Activated CD4-positive, alpha-beta T cell treated with anti-CD3 and anti-CD28 coated beads, Interleukin-2, amount 10 ng/mL, durations not matched to agents 24 days and 14 days (primary cell): ENCODE measurements at regions of chr2 and their contacts with region 1.

Region 1: GRCh38 chr2:108583903-108584520 is 49.7 kb downstream of the LIMS1 start:
- DNase-seq: peak; percentile 88
- H3K4me3 Mint-ChIP-seq: no peak overlapping the region
- H3K27ac Mint-ChIP-seq: peak overlapping the region; percentile 5
- H3K4me1 Mint-ChIP-seq: peaks cover 37% of the 10 kb centered on the region
- H3K27me3 Mint-ChIP-seq: no peaks in the 10 kb centered on the region

Region 2: DNA sequence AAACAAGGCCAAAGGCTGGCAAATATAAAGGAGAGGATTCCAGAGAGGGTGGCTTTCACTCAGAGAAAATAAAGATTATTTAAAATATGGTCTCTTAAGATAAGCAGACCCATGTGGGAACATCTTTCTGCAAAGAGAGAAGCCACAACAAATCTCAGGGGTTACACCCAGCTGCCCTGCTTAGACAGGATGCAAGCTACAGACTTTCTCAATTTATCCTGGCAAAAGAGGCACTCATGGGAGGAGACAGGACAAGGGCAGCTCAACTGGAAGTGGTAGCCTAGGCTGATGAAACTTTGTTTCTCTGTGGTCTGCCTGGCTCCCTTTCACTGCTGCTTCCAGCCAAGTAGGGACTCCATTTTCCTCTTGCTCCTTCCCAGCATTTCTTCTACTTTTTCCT is 232.1 kb before region 1 on chr2:
- intact Hi-C with region 1: loop called (anchors 1 kb)
- DNase-seq: no peak
- H3K4me3 Mint-ChIP-seq: no peak overlapping the region
- H3K27ac Mint-ChIP-seq: no peak overlapping the region
- H3K4me1 Mint-ChIP-seq: no peaks in the 10 kb centered on the region
- H3K27me3 Mint-ChIP-seq: peaks cover 12% of the 10 kb centered on the region

Region 3: DNA sequence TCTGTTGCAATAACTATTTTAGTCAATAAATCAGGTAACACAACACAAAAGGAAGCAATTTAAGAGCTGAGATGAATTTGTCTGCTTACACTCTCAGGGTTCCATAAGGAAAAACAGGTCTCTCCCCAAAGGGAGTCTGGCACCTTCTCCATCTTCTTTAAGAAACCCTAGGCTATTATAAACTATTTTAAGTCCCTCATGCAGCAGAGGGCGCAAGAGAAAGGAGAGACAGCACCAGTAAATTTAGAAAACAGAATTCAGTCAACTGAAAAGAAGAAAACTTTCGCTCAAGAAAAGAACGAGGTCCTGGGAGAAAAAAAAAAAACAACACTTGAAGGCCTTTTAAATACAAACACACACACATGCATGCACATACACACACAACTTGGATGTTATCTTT is 187.2 kb before region 1 on chr2:
- intact Hi-C with region 1: loop called (anchors 5 kb)
- DNase-seq: peak; percentile 60
- H3K4me3 Mint-ChIP-seq: no peak overlapping the region
- H3K27ac Mint-ChIP-seq: no peak overlapping the region
- H3K4me1 Mint-ChIP-seq: no peaks in the 10 kb centered on the region
- H3K27me3 Mint-ChIP-seq: peaks cover 5% of the 10 kb centered on the region

Region 4: GRCh38 chr2:108448678-108449493 is 135.1 kb before region 1 on chr2 and contains the start of gene GCC2:
- intact Hi-C with region 1: loop called (anchors 5 kb)
- DNase-seq: peak; percentile 99
- H3K4me3 Mint-ChIP-seq: peak within 1 kb of the TSS; percentile 100
- H3K27ac Mint-ChIP-seq: peak within 1 kb of the TSS; percentile 98
- H3K4me1 Mint-ChIP-seq: peaks cover 27% of the 10 kb centered on the region
- H3K27me3 Mint-ChIP-seq: no peaks in the 10 kb centered on the region
- total RNA-seq, gene GCC2: 38.1 and 43.4 TPM in 2 replicates

Region 5: GRCh38 chr2:108492364-108492763 is 91.6 kb before region 1 on chr2:
- intact Hi-C with region 1: loop called (anchors 5 kb)
- DNase-seq: no peak
- H3K4me3 Mint-ChIP-seq: no peak overlapping the region
- H3K27ac Mint-ChIP-seq: peak overlapping the region; percentile 45
- H3K4me1 Mint-ChIP-seq: peaks cover 4% of the 10 kb centered on the region
- H3K27me3 Mint-ChIP-seq: no peaks in the 10 kb centered on the region

Region 6: GRCh38 chr2:108533832-108534583 is 50.0 kb before region 1 on chr2 and contains the start of gene LIMS1:
- intact Hi-C with region 1: loop called (anchors 5 kb)
- DNase-seq: peak; percentile 93
- H3K4me3 Mint-ChIP-seq: peak within 1 kb of the TSS; percentile 97
- H3K27ac Mint-ChIP-seq: peak within 1 kb of the TSS; percentile 98
- H3K4me1 Mint-ChIP-seq: peaks cover 40% of the 10 kb centered on the region
- H3K27me3 Mint-ChIP-seq: no peaks in the 10 kb centered on the region
- total RNA-seq, gene LIMS1: 63.1 and 66.0 TPM in 2 replicates

Region 7: DNA sequence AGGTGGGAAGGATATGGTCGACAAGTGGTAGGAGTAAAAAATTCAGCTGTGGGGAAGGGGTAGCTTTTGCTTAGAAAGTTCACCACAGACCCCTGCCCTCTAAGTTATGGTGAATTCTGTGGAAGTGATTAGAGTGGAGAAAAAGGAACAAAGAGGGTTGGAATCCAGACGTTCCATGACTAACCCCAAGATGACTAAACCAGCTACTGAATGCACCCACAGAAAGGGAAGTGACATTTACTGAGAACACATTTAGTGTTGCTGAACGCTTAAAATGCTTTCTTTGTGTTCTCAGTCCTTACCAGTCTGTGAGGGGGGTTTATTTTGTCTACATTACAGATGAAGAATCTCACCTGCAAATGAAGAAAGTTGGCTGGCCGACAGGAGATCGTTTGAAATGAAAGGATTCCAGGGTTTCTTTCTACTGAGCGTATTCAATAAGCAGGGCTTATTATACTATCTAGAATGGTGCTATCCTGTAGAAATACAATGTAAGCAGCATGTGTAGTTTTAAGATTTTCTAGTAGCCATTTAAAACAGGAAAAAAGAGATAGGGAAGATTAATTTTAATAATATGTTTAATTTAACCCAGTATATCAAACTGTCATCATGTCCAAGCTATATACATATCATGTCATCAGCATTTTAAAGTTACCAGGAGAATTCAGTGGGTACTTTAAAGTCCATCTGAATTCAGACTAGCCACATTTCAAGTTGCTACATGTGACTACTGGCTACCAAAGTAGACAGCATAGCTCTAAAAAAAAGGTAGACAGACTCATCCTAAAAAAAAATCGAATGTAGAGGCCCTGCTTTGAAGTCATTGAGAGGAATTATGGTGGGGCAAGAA is 10.3 kb after region 1 on chr2:
- intact Hi-C with region 1: loop called (anchors 2 kb)
- DNase-seq: peak; percentile 65
- H3K4me3 Mint-ChIP-seq: peak overlapping the region; percentile 83
- H3K27ac Mint-ChIP-seq: peak overlapping the region; percentile 92
- H3K4me1 Mint-ChIP-seq: peaks cover 52% of the 10 kb centered on the region
- H3K27me3 Mint-ChIP-seq: no peaks in the 10 kb centered on the region

Region 8: DNA sequence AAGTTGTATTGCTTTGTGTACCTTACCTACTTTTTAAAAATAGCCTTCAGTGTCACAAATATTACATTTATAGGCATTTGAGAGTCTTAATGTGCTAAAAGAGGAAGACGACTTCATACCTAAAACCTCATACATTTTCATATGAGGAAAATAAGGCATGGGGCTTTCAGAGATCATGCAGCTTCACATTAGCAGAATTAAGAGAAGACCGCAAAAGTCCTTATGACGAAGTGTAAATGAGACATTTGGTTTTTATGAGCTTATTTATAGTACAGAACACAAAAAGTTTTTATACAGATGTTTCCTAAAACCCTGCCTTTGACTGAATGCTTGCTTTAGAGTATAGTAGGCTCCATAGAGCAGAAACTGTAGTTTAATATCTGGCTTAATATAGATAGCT is 192.5 kb after region 1 on chr2:
- intact Hi-C with region 1: no loop called
- DNase-seq: no peak
- H3K4me3 Mint-ChIP-seq: no peak overlapping the region
- H3K27ac Mint-ChIP-seq: no peak overlapping the region
- H3K4me1 Mint-ChIP-seq: peaks cover 3% of the 10 kb centered on the region
- H3K27me3 Mint-ChIP-seq: no peaks in the 10 kb centered on the region